GM12878 (cell line): ENCODE measurements at regions of chr2 and their contacts with region 1.

Region 1: DNA sequence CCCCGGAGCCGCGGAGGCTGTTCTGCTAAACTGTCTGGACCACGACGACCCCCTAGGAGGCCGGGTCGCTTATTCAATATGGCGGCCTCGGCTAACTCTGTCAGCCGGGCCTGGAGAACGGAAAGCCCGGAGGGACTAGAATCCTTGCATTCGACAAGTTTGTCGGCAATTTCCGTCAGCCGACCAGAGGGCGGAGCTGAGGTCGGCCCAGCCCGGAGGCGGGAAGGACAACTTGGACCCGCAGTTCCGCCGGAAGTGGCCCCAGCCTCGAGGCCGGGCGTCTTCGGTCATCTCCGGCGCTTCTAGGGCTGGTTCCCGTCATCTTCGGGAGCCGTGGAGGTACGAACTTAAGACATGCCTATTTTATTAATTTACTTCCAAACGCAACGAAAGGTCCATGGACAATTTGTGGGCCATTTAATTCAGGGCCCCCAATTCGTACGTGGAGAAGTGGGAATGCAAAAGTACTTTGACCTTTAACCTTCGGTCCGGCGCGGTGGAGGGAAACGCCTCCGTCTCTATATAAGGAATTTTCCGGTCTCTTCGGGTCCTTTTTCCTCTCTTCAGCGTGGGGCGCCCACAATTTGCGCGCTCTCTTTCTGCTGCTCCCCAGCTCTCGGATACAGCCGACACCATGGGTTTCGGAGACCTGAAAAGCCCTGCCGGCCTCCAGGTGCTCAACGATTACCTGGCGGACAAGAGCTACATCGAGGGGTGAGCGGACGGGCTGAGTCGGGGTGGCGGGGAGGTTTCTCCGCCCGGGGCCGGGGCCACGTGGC is at the starts of genes EEF1B2 and NDUFS1:
- DNase-seq: peak; percentile 92
- ATAC-seq: peak; percentile 92
- H3K4me3 ChIP-seq: peak within 1 kb of the TSS; percentile 93
- H3K27ac ChIP-seq: peak within 1 kb of the TSS; percentile 94
- H3K4me1 ChIP-seq: peaks cover 2% of the 10 kb centered on the region; the same call in 1 of the 2 replicates
- H3K27me3 ChIP-seq: no peaks in the 10 kb centered on the region
- CTCF ChIP-seq: no peak
- EP300 ChIP-seq: no peak
- POLR2A ChIP-seq: peak; percentile 83
- RAD21 ChIP-seq: no peak
- polyA plus RNA-seq, gene EEF1B2: 1,407 to 2,110 TPM
- polyA plus RNA-seq, gene NDUFS1: 62.6 to 69.3 TPM

Region 2: DNA sequence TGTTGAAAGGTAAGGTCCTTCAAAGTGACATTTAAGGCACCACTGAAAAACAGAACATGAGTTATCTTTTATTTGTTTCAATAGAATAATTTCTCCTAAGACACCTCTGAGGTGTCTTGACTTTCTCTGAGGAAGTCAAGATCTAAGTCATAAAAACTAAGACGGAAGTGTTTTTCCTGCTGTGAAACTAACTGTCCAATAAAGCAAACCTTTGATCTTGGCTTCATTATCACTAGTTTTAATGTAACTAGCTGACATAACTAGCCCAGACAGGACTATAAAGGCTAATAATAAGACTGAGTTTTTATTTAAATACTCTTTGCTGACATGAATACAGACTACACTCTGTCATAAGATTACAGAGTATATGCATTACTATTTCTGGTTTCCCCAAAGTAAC is 110.1 kb before region 1 on chr2:
- CTCF ChIA-PET with region 1: no interaction called
- POLR2A ChIA-PET with region 1: no interaction called
- RAD21 ChIA-PET with region 1: no interaction called
- SMC1A ChIA-PET with region 1: no interaction called
- in situ Hi-C with region 1: no loop called
- intact Hi-C with region 1: no loop called
- DNase-seq: no peak
- ATAC-seq: no peak
- H3K4me3 ChIP-seq: no peak overlapping the region
- H3K27ac ChIP-seq: no peak overlapping the region
- H3K4me1 ChIP-seq: no peaks in the 10 kb centered on the region
- H3K27me3 ChIP-seq: no peaks in the 10 kb centered on the region
- CTCF ChIP-seq: no peak
- EP300 ChIP-seq: no peak
- POLR2A ChIP-seq: no peak
- RAD21 ChIP-seq: no peak

Region 3: GRCh38 chr2:206085742-206086445 is 73.6 kb before region 1 on chr2 and contains the start of gene INO80D:
- CTCF ChIA-PET with region 1: interaction called, 6 read pairs
- POLR2A ChIA-PET with region 1: interaction called, 14 read pairs
- RAD21 ChIA-PET with region 1: interaction called, 4 read pairs
- SMC1A ChIA-PET with region 1: interaction called, 5 read pairs
- in situ Hi-C with region 1: no loop called
- intact Hi-C with region 1: loop called (anchors 1 kb)
- DNase-seq: peak; percentile 60
- ATAC-seq: peak; percentile 91
- H3K4me3 ChIP-seq: peak within 1 kb of the TSS; percentile 100
- H3K27ac ChIP-seq: peak within 1 kb of the TSS; percentile 97
- H3K4me1 ChIP-seq: peaks cover 13% of the 10 kb centered on the region
- H3K27me3 ChIP-seq: no peaks in the 10 kb centered on the region
- CTCF ChIP-seq: peak; percentile 56 to 70 (median 62)
- EP300 ChIP-seq: no peak
- POLR2A ChIP-seq: peak; percentile 82
- RAD21 ChIP-seq: peak; percentile 40
- polyA plus RNA-seq, gene INO80D: 0.73 to 1.9 TPM

Region 4: GRCh38 chr2:206260188-206261012 is 100.9 kb after region 1 on chr2:
- CTCF ChIA-PET with region 1: interaction called, 22 read pairs
- POLR2A ChIA-PET with region 1: no interaction called
- RAD21 ChIA-PET with region 1: interaction called, 3 read pairs
- SMC1A ChIA-PET with region 1: interaction called, 5 read pairs
- in situ Hi-C with region 1: no loop called
- intact Hi-C with region 1: loop called (anchors 2 kb)
- DNase-seq: no peak
- ATAC-seq: peak; percentile 95
- H3K4me3 ChIP-seq: no peak overlapping the region
- H3K27ac ChIP-seq: no peak overlapping the region
- H3K4me1 ChIP-seq: no peaks in the 10 kb centered on the region; the same call in 1 of the 2 replicates
- H3K27me3 ChIP-seq: peaks cover 2 to 18% of the 10 kb centered on the region in 2 experiments
- CTCF ChIP-seq: peak; percentile 45 to 55 (median 49)
- EP300 ChIP-seq: no peak
- POLR2A ChIP-seq: no peak
- RAD21 ChIP-seq: peak; percentile 54

Region 5: GRCh38 chr2:206287197-206287596 is 127.7 kb after region 1 on chr2:
- CTCF ChIA-PET with region 1: no interaction called
- POLR2A ChIA-PET with region 1: no interaction called
- RAD21 ChIA-PET with region 1: no interaction called
- SMC1A ChIA-PET with region 1: no interaction called
- in situ Hi-C with region 1: no loop called
- intact Hi-C with region 1: no loop called
- DNase-seq: no peak
- ATAC-seq: no peak
- H3K4me3 ChIP-seq: no peak overlapping the region
- H3K27ac ChIP-seq: no peak overlapping the region
- H3K4me1 ChIP-seq: no peaks in the 10 kb centered on the region
- H3K27me3 ChIP-seq: no peaks in the 10 kb centered on the region
- CTCF ChIP-seq: no peak
- EP300 ChIP-seq: no peak
- POLR2A ChIP-seq: no peak
- RAD21 ChIP-seq: no peak

Region 6: GRCh38 chr2:206457188-206457634 is 297.7 kb after region 1 on chr2:
- CTCF ChIA-PET with region 1: no interaction called
- POLR2A ChIA-PET with region 1: no interaction called
- RAD21 ChIA-PET with region 1: no interaction called
- SMC1A ChIA-PET with region 1: no interaction called
- in situ Hi-C with region 1: no loop called
- intact Hi-C with region 1: loop called (anchors 10 kb)
- DNase-seq: peak; percentile 83
- ATAC-seq: peak; percentile 88
- H3K4me3 ChIP-seq: no peak overlapping the region
- H3K27ac ChIP-seq: no peak overlapping the region
- H3K4me1 ChIP-seq: peaks cover 23% of the 10 kb centered on the region
- H3K27me3 ChIP-seq: no peaks in the 10 kb centered on the region
- CTCF ChIP-seq: no peak
- EP300 ChIP-seq: peak; percentile 82 to 90
- POLR2A ChIP-seq: no peak
- RAD21 ChIP-seq: no peak